SK-N-SH (cell line): ENCODE measurements at regions of chr22 and their contacts with region 1.

Region 1: GRCh38 chr22:46006379-46007002 is 29.5 kb upstream of the WNT7B start:
- DNase-seq: peak; percentile 96
- H3K4me3 ChIP-seq: peak overlapping the region; percentile 13 to 54; a peak in 2 of 4 replicates
- H3K27ac ChIP-seq: peak overlapping the region; percentile 99 to 100
- H3K4me1 ChIP-seq: peaks cover 46 to 57% of the 10 kb centered on the region in 2 experiments; a peak in 3 of 4 replicates
- H3K27me3 ChIP-seq: no peaks in the 10 kb centered on the region
- CTCF ChIP-seq: peak; percentile 94
- EP300 ChIP-seq: peak in 1 of 2 experiments; percentile 53; a peak in 2 of 4 replicates
- RAD21 ChIP-seq: peak; percentile 86

Region 2: GRCh38 chr22:46035742-46036557 is 29.5 kb after region 1 on chr22:
- CTCF ChIA-PET with region 1: interaction called, 73 read pairs
- POLR2A ChIA-PET with region 1: interaction called, 35 read pairs
- DNase-seq: peak; percentile 100
- H3K4me3 ChIP-seq: peak overlapping the region; percentile 88 to 91
- H3K27ac ChIP-seq: peak overlapping the region; percentile 89 to 95
- H3K4me1 ChIP-seq: peaks cover 0 to 35% of the 10 kb centered on the region in 2 experiments; a peak in 3 of 4 replicates
- H3K27me3 ChIP-seq: no peaks in the 10 kb centered on the region
- CTCF ChIP-seq: no peak
- EP300 ChIP-seq: no peak
- RAD21 ChIP-seq: no peak

Region 3: DNA sequence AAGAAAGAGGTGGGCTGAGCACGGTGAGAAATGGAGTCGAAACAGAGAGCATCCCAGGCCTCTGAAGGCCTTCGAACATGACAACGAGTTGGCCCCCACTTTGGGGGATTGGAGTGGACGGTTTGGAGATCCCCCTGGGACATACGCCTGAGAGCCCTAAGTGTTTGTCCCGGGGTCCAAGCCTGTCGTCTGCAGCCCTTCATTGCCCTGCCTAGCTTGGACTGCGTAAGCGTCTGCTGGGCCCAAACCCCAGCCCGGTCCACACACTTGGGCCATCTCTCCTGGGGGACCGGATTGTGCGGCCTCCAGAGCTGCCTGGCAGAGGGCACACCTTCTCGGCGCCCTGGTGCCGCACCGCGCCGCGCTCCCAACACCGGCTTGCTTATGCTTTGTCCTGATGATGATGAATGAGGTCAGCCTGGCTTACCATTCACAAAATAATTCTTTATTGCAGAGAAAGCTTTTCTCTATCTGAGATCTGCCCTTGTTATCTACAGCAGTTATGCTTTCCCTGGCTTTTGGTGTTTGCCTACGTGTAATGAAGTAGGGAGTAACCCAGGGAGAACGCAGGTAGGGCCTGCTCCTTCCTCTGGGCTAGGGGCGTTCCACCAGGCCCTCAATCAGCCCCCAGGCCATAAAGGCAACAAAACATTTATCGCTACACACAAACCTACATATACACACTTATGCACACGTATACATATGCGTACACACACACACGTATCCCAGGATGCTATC is 57.9 kb after region 1 on chr22:
- CTCF ChIA-PET with region 1: interaction called, 76 read pairs
- POLR2A ChIA-PET with region 1: interaction called, 38 read pairs
- DNase-seq: peak; percentile 70
- H3K4me3 ChIP-seq: peak overlapping the region; percentile 38 to 69
- H3K27ac ChIP-seq: peak overlapping the region; percentile 100
- H3K4me1 ChIP-seq: peaks cover 34 to 54% of the 10 kb centered on the region in 2 experiments; a peak in 3 of 4 replicates
- H3K27me3 ChIP-seq: no peaks in the 10 kb centered on the region
- CTCF ChIP-seq: no peak
- EP300 ChIP-seq: no peak
- RAD21 ChIP-seq: no peak

Region 4: GRCh38 chr22:46087336-46088277 is 81.1 kb after region 1 on chr22:
- CTCF ChIA-PET with region 1: interaction called, 23 read pairs
- POLR2A ChIA-PET with region 1: interaction called, 12 read pairs
- DNase-seq: peak; percentile 94
- H3K4me3 ChIP-seq: peak overlapping the region; percentile 90 to 92
- H3K27ac ChIP-seq: peak overlapping the region; percentile 96 to 100
- H3K4me1 ChIP-seq: peaks cover 41 to 97% of the 10 kb centered on the region in 2 experiments
- H3K27me3 ChIP-seq: no peaks in the 10 kb centered on the region
- CTCF ChIP-seq: no peak
- EP300 ChIP-seq: peak; percentile 21 to 48; a peak in 3 of 4 replicates
- RAD21 ChIP-seq: peak; percentile 17

Region 5: GRCh38 chr22:46122511-46122971 is 116.0 kb after region 1 on chr22:
- CTCF ChIA-PET with region 1: interaction called, 102 read pairs
- POLR2A ChIA-PET with region 1: interaction called, 11 read pairs
- DNase-seq: peak; percentile 95
- H3K4me3 ChIP-seq: no peak overlapping the region; a peak in 2 of 4 replicates
- H3K27ac ChIP-seq: no peak overlapping the region
- H3K4me1 ChIP-seq: peaks cover 0 to 29% of the 10 kb centered on the region in 2 experiments; a peak in 1 of 4 replicates
- H3K27me3 ChIP-seq: no peaks in the 10 kb centered on the region
- CTCF ChIP-seq: peak; percentile 91
- EP300 ChIP-seq: no peak
- RAD21 ChIP-seq: peak; percentile 88